Vagina (tissue), 2 donors: ENCODE measurements at regions of chr14 and their contacts with region 1.

Region 1: DNA sequence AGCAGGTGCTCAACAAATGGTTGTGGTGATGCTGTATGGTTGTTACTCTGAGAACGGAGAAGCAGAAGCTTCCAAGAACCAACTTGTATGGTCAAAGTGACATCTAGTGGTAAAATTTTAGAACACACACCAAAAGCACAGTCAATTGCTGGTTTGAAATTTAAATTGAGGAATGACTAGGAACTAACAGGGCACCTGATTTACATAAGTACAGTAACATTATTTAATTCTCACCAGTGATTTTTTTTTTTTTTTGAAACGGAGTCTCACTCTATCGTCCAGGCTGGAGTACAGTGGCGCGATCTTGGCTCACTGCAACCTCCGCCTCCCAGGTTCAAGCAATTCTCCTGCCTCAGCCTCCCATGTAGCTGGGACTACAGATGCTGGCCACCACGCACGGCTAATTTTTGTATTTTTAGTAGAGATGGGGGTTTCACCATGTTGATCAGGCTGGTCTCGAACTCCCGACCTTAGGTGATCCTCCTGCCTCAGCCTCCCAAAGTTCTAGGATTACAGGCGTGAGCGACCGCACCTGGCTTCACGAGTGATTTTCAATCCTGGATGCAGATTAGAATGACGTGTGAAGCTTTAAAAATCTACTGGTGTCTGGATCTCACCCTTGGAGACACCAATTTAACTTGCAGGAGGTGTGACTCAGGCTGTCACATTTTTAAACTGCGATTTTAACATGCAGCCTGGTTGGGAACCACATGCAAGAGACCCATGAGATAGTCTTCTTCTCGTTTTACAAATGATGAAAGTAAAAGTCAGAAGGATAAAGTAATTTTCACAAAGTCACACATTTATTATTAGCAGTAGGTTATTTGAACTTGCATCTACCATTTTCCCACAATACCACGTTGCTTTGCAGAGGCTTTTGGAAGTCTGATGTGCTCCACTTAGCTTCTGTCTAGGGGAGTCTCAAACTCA is 14.1 kb upstream of the NUMB start:
- DNase-seq: no peak
- H3K4me3 ChIP-seq: no peak overlapping the region
- H3K27ac ChIP-seq: no peak overlapping the region
- H3K4me1 ChIP-seq: no peaks in the 10 kb centered on the region
- H3K27me3 ChIP-seq: no peaks in the 10 kb centered on the region
- CTCF ChIP-seq: peak; percentile 51 to 74 (median 51)
- POLR2A ChIP-seq: no peak

Region 2: DNA sequence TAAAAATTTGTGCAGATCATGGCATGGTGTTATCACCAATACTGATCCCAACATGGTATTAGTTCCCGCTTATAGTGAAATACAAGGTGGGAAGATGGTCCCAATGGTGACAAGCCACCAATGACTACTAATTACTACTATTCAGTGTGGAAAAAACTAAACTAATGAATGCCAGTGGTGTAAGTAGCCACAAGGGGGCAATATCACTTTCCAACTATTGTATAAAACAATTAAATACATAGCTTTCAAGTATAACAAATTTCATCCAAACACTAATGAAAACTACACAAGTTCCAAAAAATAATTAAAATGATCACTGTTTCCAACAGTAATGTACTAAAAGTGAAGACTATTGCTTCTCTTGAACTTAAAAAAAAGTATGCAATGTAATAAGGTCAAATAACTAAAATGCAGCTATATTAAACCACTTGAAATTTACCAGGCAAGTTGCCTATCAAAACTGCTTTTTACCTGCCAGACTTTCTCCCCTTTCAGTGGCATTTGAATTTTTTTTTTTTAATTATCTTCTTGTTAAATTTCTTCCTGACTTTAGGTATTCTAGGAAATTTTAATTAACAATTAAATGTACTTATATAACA is 177.2 kb before region 1 on chr14:
- intact Hi-C with region 1: loop called (anchors 5 kb)
- DNase-seq: no peak
- H3K4me3 ChIP-seq: no peak overlapping the region
- H3K27ac ChIP-seq: no peak overlapping the region
- H3K4me1 ChIP-seq: no peaks in the 10 kb centered on the region
- H3K27me3 ChIP-seq: no peaks in the 10 kb centered on the region
- CTCF ChIP-seq: peak; percentile 31 to 60 (median 40)
- POLR2A ChIP-seq: no peak

Region 3: GRCh38 chr14:73381380-73382013 is 91.0 kb before region 1 on chr14:
- intact Hi-C with region 1: no loop called
- DNase-seq: no peak
- H3K4me3 ChIP-seq: no peak overlapping the region
- H3K27ac ChIP-seq: no peak overlapping the region
- H3K4me1 ChIP-seq: no peaks in the 10 kb centered on the region
- H3K27me3 ChIP-seq: no peaks in the 10 kb centered on the region
- CTCF ChIP-seq: no peak
- POLR2A ChIP-seq: no peak

Region 4: GRCh38 chr14:73553845-73554244 is 81.4 kb after region 1 on chr14:
- intact Hi-C with region 1: no loop called
- DNase-seq: no peak
- H3K4me3 ChIP-seq: no peak overlapping the region
- H3K27ac ChIP-seq: no peak overlapping the region
- H3K4me1 ChIP-seq: no peaks in the 10 kb centered on the region
- H3K27me3 ChIP-seq: no peaks in the 10 kb centered on the region
- CTCF ChIP-seq: no peak
- POLR2A ChIP-seq: no peak